ENCODE measurements at regions of chr3 and their contacts with region 1.

Region 1: GRCh38 chr3:188262913-188263683 is 109.1 kb downstream of the LPP start:
- DNase-seq: peak; percentile 97
- H3K4me3 ChIP-seq: no peak overlapping the region
- H3K27ac ChIP-seq: peak overlapping the region; percentile 88
- H3K4me1 ChIP-seq: peaks cover 79% of the 10 kb centered on the region
- H3K27me3 ChIP-seq: no peaks in the 10 kb centered on the region
- CTCF ChIP-seq: no peak
- POLR2A ChIP-seq: peak; percentile 65

Region 2: DNA sequence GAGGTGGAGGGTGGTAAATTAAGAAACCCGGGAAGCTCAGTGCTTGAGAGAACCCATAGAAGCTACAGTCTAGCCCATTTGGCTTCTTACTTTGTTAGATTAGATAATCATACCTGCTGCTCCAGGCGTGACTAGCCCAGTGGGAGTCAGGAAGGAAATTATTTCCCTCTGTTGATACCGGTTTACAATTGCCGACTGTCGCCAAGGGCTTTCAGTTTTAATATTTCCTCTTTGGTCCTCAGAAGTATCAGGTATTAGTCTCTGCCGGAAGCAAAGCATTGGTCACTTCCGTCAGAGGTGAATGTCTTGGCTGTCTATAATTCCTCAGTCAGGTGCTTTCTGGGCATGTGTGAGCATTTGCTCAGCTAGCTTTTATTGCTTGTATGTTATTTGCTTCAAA is 33.9 kb before region 1 on chr3:
- CTCF ChIA-PET with region 1: interaction called, 3 read pairs
- POLR2A ChIA-PET with region 1: no interaction called
- dilution Hi-C with region 1: no loop called
- intact Hi-C with region 1: loop called (anchors 1 kb)
- DNase-seq: peak; percentile 77
- H3K4me3 ChIP-seq: no peak overlapping the region
- H3K27ac ChIP-seq: peak overlapping the region; percentile 39
- H3K4me1 ChIP-seq: peaks cover 17% of the 10 kb centered on the region
- H3K27me3 ChIP-seq: no peaks in the 10 kb centered on the region
- CTCF ChIP-seq: no peak
- POLR2A ChIP-seq: no peak

Region 3: GRCh38 chr3:188348435-188349244 is 85.5 kb after region 1 on chr3:
- CTCF ChIA-PET with region 1: interaction called, 3 read pairs
- POLR2A ChIA-PET with region 1: interaction called, 4 read pairs
- dilution Hi-C with region 1: no loop called
- intact Hi-C with region 1: loop called (anchors 5 kb)
- DNase-seq: peak; percentile 88
- H3K4me3 ChIP-seq: no peak overlapping the region
- H3K27ac ChIP-seq: peak overlapping the region; percentile 62
- H3K4me1 ChIP-seq: peaks cover 28% of the 10 kb centered on the region
- H3K27me3 ChIP-seq: no peaks in the 10 kb centered on the region
- CTCF ChIP-seq: no peak
- POLR2A ChIP-seq: no peak

Region 4: DNA sequence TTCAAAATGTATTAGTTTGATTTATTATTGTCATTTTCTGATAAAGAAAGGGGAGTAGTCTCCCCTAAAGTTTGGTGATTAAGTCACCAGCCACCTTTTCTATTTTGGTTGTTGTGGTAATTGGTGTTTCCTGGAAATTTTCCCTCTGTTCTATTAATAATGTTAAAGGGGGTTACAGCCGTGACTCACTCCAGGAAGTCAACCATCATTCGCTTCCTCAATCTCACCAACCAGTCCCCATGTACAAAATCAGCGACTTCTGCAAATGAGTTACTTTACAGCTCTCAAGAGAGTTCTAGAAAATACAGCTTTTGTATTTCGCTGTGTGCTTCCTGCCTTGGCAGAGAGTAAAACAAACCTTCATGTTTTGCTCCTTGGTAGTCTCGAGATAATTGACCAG is 176.0 kb after region 1 on chr3:
- CTCF ChIA-PET with region 1: no interaction called
- POLR2A ChIA-PET with region 1: no interaction called
- dilution Hi-C with region 1: no loop called
- intact Hi-C with region 1: loop called (anchors 2 kb)
- DNase-seq: peak; percentile 85
- H3K4me3 ChIP-seq: no peak overlapping the region
- H3K27ac ChIP-seq: peak overlapping the region; percentile 86
- H3K4me1 ChIP-seq: peaks cover 36% of the 10 kb centered on the region
- H3K27me3 ChIP-seq: no peaks in the 10 kb centered on the region
- CTCF ChIP-seq: no peak
- POLR2A ChIP-seq: no peak

Region 5: DNA sequence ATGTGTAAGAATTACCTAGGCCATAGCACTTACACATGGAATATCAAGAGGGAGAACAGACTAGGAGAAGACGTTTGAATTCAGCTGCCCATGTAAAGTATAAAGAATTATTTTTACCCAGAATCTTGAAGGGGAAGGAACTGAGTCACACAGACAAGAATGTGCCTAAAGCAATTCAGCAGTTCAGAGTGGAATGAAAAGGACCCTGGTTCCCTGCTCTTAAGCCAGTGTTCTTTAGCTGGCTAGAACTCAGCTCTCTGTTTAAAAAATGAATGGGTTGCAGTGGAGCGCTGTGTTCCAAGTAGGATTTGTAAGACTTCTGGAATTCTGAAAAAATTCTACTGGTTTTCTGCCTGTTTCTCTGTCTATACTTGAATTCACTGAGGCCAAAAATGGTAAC is 331.0 kb after region 1 on chr3:
- CTCF ChIA-PET with region 1: no interaction called
- POLR2A ChIA-PET with region 1: no interaction called
- dilution Hi-C with region 1: no loop called
- intact Hi-C with region 1: loop called (anchors 2 kb)
- DNase-seq: peak; percentile 86
- H3K4me3 ChIP-seq: no peak overlapping the region
- H3K27ac ChIP-seq: peak overlapping the region; percentile 50
- H3K4me1 ChIP-seq: peaks cover 25% of the 10 kb centered on the region
- H3K27me3 ChIP-seq: no peaks in the 10 kb centered on the region
- CTCF ChIP-seq: no peak
- POLR2A ChIP-seq: no peak

Region 6: GRCh38 chr3:188900421-188900951 is 637.4 kb after region 1 on chr3:
- CTCF ChIA-PET with region 1: no interaction called
- POLR2A ChIA-PET with region 1: no interaction called
- dilution Hi-C with region 1: no loop called
- intact Hi-C with region 1: loop called (anchors 2 kb)
- DNase-seq: peak; percentile 94
- H3K4me3 ChIP-seq: peak overlapping the region in 1 of 3 experiments; percentile 35
- H3K27ac ChIP-seq: peak overlapping the region; percentile 100
- H3K4me1 ChIP-seq: peaks cover 37% of the 10 kb centered on the region
- H3K27me3 ChIP-seq: no peaks in the 10 kb centered on the region
- CTCF ChIP-seq: no peak
- POLR2A ChIP-seq: no peak

Measured in endothelial cell of umbilical vein (primary cell).